Activated CD4-positive, alpha-beta T cell treated with anti-CD3 and anti-CD28 coated beads for 36 hours (primary cell): ENCODE measurements at regions of chr21 and their contacts with region 1.

Region 1: GRCh38 chr21:14545906-14546480 is at the start of gene SAMSN1:
- DNase-seq: peak; percentile 82
- ATAC-seq: peak; percentile 90
- H3K4me3 Mint-ChIP-seq: peak within 1 kb of the TSS; percentile 83
- H3K27ac Mint-ChIP-seq: peak within 1 kb of the TSS; percentile 89
- H3K4me1 Mint-ChIP-seq: peaks cover 53% of the 10 kb centered on the region
- H3K27me3 Mint-ChIP-seq: no peaks in the 10 kb centered on the region
- total RNA-seq, gene SAMSN1: 39.8 to 43.5 TPM

Region 2: GRCh38 chr21:14382835-14383594 is 163.0 kb before region 1 on chr21 and contains the start of gene HSPA13:
- CTCF ChIA-PET with region 1: no interaction called
- POLR2A ChIA-PET with region 1: interaction called, 4 read pairs
- intact Hi-C with region 1: loop called (anchors 5 kb)
- DNase-seq: peak; percentile 99
- ATAC-seq: peak; percentile 97
- H3K4me3 Mint-ChIP-seq: peak within 1 kb of the TSS; percentile 90
- H3K27ac Mint-ChIP-seq: peak within 1 kb of the TSS; percentile 98
- H3K4me1 Mint-ChIP-seq: peaks cover 29% of the 10 kb centered on the region
- H3K27me3 Mint-ChIP-seq: no peaks in the 10 kb centered on the region
- total RNA-seq, gene HSPA13: 29.5 to 50.2 TPM

Region 3: GRCh38 chr21:14523234-14523633 is 22.8 kb before region 1 on chr21:
- CTCF ChIA-PET with region 1: interaction called, 11 read pairs
- POLR2A ChIA-PET with region 1: interaction called, 4 read pairs
- intact Hi-C with region 1: loop called (anchors 1 kb)
- DNase-seq: peak; percentile 64
- ATAC-seq: peak; percentile 79
- H3K4me3 Mint-ChIP-seq: peak overlapping the region; percentile 59
- H3K27ac Mint-ChIP-seq: peak overlapping the region; percentile 91
- H3K4me1 Mint-ChIP-seq: peaks cover 62% of the 10 kb centered on the region
- H3K27me3 Mint-ChIP-seq: no peaks in the 10 kb centered on the region

Region 4: GRCh38 chr21:14581902-14582457 is 36.0 kb after region 1 on chr21:
- CTCF ChIA-PET with region 1: no interaction called
- POLR2A ChIA-PET with region 1: no interaction called
- intact Hi-C with region 1: loop called (anchors 2 to 5 kb)
- DNase-seq: no peak
- ATAC-seq: peak; percentile 68
- H3K4me3 Mint-ChIP-seq: peak overlapping the region; percentile 5
- H3K27ac Mint-ChIP-seq: no peak overlapping the region
- H3K4me1 Mint-ChIP-seq: peaks cover 16% of the 10 kb centered on the region
- H3K27me3 Mint-ChIP-seq: no peaks in the 10 kb centered on the region

Region 5: GRCh38 chr21:14630556-14631069 is 84.6 kb after region 1 on chr21:
- CTCF ChIA-PET with region 1: no interaction called
- POLR2A ChIA-PET with region 1: no interaction called
- intact Hi-C with region 1: loop called (anchors 2 to 5 kb)
- DNase-seq: no peak
- ATAC-seq: peak; percentile 90
- H3K4me3 Mint-ChIP-seq: peak overlapping the region; percentile 19
- H3K27ac Mint-ChIP-seq: peak overlapping the region; percentile 77
- H3K4me1 Mint-ChIP-seq: peaks cover 16% of the 10 kb centered on the region
- H3K27me3 Mint-ChIP-seq: no peaks in the 10 kb centered on the region

Region 6: GRCh38 chr21:14737922-14738321 is 191.9 kb after region 1 on chr21:
- CTCF ChIA-PET with region 1: interaction called, 5 read pairs
- POLR2A ChIA-PET with region 1: no interaction called
- intact Hi-C with region 1: loop called (anchors 5 kb)
- DNase-seq: peak; percentile 53
- ATAC-seq: peak; percentile 68
- H3K4me3 Mint-ChIP-seq: no peak overlapping the region
- H3K27ac Mint-ChIP-seq: no peak overlapping the region
- H3K4me1 Mint-ChIP-seq: peaks cover 31% of the 10 kb centered on the region
- H3K27me3 Mint-ChIP-seq: no peaks in the 10 kb centered on the region

Region 7: DNA sequence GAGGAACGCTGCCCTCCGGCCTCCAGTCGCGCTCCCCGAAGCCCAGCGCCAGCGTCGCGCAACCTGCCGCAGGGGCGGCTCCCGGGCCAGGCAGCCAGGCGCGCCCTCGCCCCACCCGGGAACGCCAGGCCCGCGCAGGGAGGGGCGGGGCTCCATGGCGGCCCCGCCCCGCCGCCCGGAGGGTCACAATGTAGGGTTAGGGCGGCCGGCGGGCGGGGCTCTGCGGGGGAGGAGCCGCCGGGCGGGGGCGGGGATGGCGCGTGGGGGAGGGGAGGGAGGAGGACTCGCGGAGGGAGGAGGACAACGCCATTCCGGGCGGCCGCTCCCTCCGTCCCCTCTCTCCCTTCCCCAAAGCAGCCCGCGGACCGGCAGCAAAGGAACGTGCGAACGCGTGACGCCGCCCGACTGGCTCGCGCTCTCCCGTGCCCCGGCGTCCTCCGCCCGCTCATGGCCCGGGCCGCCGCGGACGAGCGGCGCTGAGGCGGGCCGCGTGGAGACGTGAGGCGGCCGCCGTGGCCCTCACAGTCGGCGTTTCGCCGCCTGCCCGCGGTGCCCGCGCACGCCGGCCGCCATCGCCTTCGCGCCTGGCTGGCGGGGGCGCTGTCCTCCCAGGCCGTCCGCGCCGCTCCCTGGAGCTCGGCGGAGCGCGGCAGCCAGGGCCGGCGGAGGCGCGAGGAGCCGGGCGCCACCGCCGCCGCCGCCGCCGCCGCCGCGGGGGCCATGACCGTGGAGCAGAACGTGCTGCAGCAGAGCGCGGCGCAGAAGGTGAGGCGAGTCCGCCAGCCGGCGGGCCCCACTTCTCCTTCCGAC is 1183.9 kb after region 1 on chr21 and contains the start of gene USP25:
- CTCF ChIA-PET with region 1: no interaction called
- POLR2A ChIA-PET with region 1: no interaction called
- intact Hi-C with region 1: loop called in 1 of 2 experiments (anchors 5 kb)
- DNase-seq: peak; percentile 90
- ATAC-seq: peak; percentile 82
- H3K4me3 Mint-ChIP-seq: peak within 1 kb of the TSS; percentile 90
- H3K27ac Mint-ChIP-seq: peak within 1 kb of the TSS; percentile 90
- H3K4me1 Mint-ChIP-seq: peaks cover 25% of the 10 kb centered on the region
- H3K27me3 Mint-ChIP-seq: peaks cover 4% of the 10 kb centered on the region
- total RNA-seq, gene USP25: 31.8 to 35.8 TPM